ENCODE measurements at regions of chr2 and their contacts with region 1.

Region 1: DNA sequence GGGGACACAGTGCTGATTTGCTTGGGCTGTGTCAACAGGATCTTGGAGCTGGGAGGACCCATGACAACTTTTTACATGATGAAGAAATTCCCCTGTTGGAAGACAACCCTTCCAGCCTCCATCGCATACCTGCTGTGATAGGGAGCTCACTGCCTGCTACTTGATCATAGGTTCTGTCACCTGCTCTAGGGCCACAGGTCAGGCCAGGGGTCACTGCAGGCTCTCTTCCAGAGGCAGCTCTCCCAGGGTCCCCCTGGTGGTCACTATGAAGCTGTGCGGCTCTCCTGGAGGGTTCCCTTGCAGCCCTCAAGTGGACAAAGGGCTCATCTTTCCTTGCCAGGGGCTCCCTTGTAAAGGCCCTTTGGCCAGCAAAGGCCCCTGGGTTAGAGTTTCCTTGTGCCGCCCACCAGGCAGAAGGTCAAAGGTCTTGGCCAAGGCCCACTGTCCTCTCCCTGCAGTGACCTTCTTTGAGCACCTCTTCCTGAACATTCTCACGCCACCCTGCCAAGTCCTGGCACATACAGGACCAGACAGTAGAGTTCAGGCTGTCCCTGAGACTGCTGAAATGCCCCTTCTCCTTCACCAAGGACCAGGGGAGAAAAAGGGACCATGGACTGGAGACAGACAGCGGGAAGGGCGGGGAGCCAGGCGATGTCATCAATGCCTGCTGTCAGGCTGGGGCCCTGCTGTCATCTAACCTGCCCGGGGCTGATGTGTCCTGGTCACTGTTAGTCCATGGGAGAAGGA is 345.1 kb downstream of the DYSF start:
- DNase-seq: no peak
- ATAC-seq: peak; percentile 66 to 79 (median 73)
- H3K4me3 ChIP-seq: no peak overlapping the region
- H3K27ac ChIP-seq: no peak overlapping the region
- H3K4me1 ChIP-seq: no peaks in the 10 kb centered on the region
- H3K27me3 ChIP-seq: no peaks in the 10 kb centered on the region
- CTCF ChIP-seq: peak; percentile 63

Region 2: DNA sequence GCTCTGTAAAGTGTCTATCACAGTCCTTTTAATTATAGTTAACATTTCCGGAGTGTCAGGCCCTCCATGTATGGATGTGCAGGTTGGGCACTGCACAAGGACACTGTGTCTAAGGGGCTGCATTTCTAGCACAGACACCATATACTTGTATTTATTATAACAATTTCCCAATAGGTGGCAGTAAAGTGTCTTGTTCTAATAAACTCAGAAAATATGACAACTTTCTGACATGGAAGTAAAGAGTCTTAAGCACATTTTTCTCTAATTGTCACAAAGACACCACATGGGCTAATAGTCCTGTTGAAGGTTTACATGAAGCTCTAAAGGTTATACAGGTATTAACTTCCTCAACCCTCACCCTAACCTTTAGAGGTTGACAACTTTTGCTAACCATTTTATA is 188.5 kb before region 1 on chr2:
- intact Hi-C with region 1: loop called in 1 of 2 experiments (anchors 10 kb)
- DNase-seq: no peak
- ATAC-seq: peak in 3 of 4 donors; percentile 26 to 64 (median 27)
- H3K4me3 ChIP-seq: no peak overlapping the region
- H3K27ac ChIP-seq: no peak overlapping the region
- H3K4me1 ChIP-seq: peaks cover 13% of the 10 kb centered on the region
- H3K27me3 ChIP-seq: no peaks in the 10 kb centered on the region
- CTCF ChIP-seq: peak; percentile 33

Region 3: DNA sequence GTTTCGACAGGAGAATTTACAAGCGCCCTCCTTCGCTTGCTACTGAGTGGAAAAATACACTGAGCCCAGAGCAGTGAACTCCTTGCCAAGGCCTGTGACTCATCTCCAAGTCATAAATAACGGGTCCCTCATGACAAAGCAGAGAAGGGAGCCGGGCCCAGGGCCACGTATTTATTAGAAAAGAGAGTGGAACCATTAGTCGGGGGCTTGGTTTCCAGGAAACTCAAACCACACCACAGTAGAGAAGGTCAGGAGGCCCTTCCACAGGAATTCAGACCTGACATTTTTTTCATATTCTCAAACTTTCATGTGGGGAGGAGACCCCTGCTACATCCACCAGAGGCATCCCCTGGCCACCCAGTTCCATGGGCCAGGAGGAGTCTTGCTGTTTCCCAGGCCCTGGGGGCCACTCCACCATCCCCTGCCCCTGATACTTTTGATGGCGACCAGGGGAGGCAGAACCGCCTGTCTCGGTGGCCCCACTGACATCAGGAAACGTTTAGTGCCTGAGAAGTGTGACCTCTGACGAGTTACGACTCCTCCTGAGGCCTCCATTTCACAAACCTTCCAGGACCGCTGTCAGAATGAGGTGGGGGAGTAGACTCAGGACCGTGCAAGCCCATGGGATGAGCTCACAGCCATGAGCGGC is 55.4 kb before region 1 on chr2:
- intact Hi-C with region 1: no loop called
- DNase-seq: peak; percentile 80 to 84
- ATAC-seq: peak; percentile 81 to 89 (median 84)
- H3K4me3 ChIP-seq: no peak overlapping the region
- H3K27ac ChIP-seq: peak overlapping the region; percentile 64
- H3K4me1 ChIP-seq: peaks cover 49% of the 10 kb centered on the region
- H3K27me3 ChIP-seq: no peaks in the 10 kb centered on the region
- CTCF ChIP-seq: no peak

Region 4: GRCh38 chr2:71923887-71924533 is 125.6 kb after region 1 on chr2:
- intact Hi-C with region 1: loop called (anchors 10 kb)
- DNase-seq: peak; percentile 53 to 71
- ATAC-seq: peak; percentile 86 to 95 (median 90)
- H3K4me3 ChIP-seq: no peak overlapping the region
- H3K27ac ChIP-seq: no peak overlapping the region
- H3K4me1 ChIP-seq: peaks cover 3% of the 10 kb centered on the region
- H3K27me3 ChIP-seq: no peaks in the 10 kb centered on the region
- CTCF ChIP-seq: peak; percentile 89

Region 5: GRCh38 chr2:71995067-71995665 is 196.7 kb after region 1 on chr2:
- intact Hi-C with region 1: loop called (anchors 2 to 5 kb)
- DNase-seq: no peak
- ATAC-seq: peak in 3 of 4 donors; percentile 56 to 80 (median 80)
- H3K4me3 ChIP-seq: no peak overlapping the region
- H3K27ac ChIP-seq: no peak overlapping the region
- H3K4me1 ChIP-seq: no peaks in the 10 kb centered on the region
- H3K27me3 ChIP-seq: no peaks in the 10 kb centered on the region
- CTCF ChIP-seq: peak; percentile 48

Measured in psoas muscle (tissue), 8 donors.